ENCODE measurements at regions of chr1 and their contacts with region 1.

Region 1: GRCh38 chr1:206808615-206809014 is 36.3 kb upstream of the IL10 start:
- DNase-seq: no peak
- ATAC-seq: peak; percentile 99
- H3K4me3 ChIP-seq: no peak overlapping the region
- H3K27ac ChIP-seq: no peak overlapping the region
- H3K4me1 ChIP-seq: peaks cover 11% of the 10 kb centered on the region
- H3K27me3 ChIP-seq: no peaks in the 10 kb centered on the region
- CTCF ChIP-seq: peak; percentile 69 to 92 (median 70)
- EP300 ChIP-seq: no peak
- POLR2A ChIP-seq: no peak
- RAD21 ChIP-seq: peak; percentile 99

Region 2: GRCh38 chr1:206612129-206612876 is 196.3 kb before region 1 on chr1 and contains the start of gene EIF2D:
- CTCF ChIA-PET with region 1: interaction called, 5 read pairs
- POLR2A ChIA-PET with region 1: no interaction called
- RAD21 ChIA-PET with region 1: interaction called, 3 read pairs
- SMC1A ChIA-PET with region 1: interaction called, 5 read pairs
- in situ Hi-C with region 1: no loop called
- intact Hi-C with region 1: loop called (anchors 10 kb)
- DNase-seq: peak; percentile 58
- ATAC-seq: peak; percentile 82
- H3K4me3 ChIP-seq: peak within 1 kb of the TSS; percentile 83
- H3K27ac ChIP-seq: peak within 1 kb of the TSS; percentile 80
- H3K4me1 ChIP-seq: peaks cover 23% of the 10 kb centered on the region
- H3K27me3 ChIP-seq: no peaks in the 10 kb centered on the region
- CTCF ChIP-seq: peak; percentile 96 to 99 (median 98); a peak in 5 of 6 replicates
- EP300 ChIP-seq: peak in 1 of 2 experiments; percentile 37; a peak in 1 of 4 replicates
- POLR2A ChIP-seq: peak; percentile 100
- RAD21 ChIP-seq: peak; percentile 59
- polyA plus RNA-seq, gene EIF2D: 65.4 to 77.5 TPM

Region 3: GRCh38 chr1:206716870-206717673 is 91.5 kb before region 1 on chr1:
- CTCF ChIA-PET with region 1: interaction called, 805 read pairs
- POLR2A ChIA-PET with region 1: interaction called, 4 read pairs
- RAD21 ChIA-PET with region 1: interaction called, 15 read pairs
- SMC1A ChIA-PET with region 1: interaction called, 7 read pairs
- in situ Hi-C with region 1: no loop called
- intact Hi-C with region 1: no loop called
- DNase-seq: peak; percentile 88
- ATAC-seq: peak; percentile 78
- H3K4me3 ChIP-seq: 0 out of 2 replicates have a peak overlapping the region, but pooled peaks have one; percentile 19
- H3K27ac ChIP-seq: peak overlapping the region; percentile 73
- H3K4me1 ChIP-seq: peaks cover 74% of the 10 kb centered on the region
- H3K27me3 ChIP-seq: no peaks in the 10 kb centered on the region
- CTCF ChIP-seq: no peak
- EP300 ChIP-seq: peak in 1 of 2 experiments; percentile 34; a peak in 1 of 4 replicates
- POLR2A ChIP-seq: no peak
- RAD21 ChIP-seq: no peak

Region 4: GRCh38 chr1:206766251-206766856 is 42.3 kb before region 1 on chr1:
- CTCF ChIA-PET with region 1: interaction called, 299 read pairs
- POLR2A ChIA-PET with region 1: interaction called, 41 read pairs
- RAD21 ChIA-PET with region 1: interaction called, 225 read pairs
- SMC1A ChIA-PET with region 1: interaction called, 319 read pairs
- in situ Hi-C with region 1: no loop called
- intact Hi-C with region 1: loop called (anchors 1 kb)
- DNase-seq: peak; percentile 82
- ATAC-seq: peak; percentile 72
- H3K4me3 ChIP-seq: no peak overlapping the region
- H3K27ac ChIP-seq: peak overlapping the region; percentile 28
- H3K4me1 ChIP-seq: peaks cover 48% of the 10 kb centered on the region
- H3K27me3 ChIP-seq: no peaks in the 10 kb centered on the region
- CTCF ChIP-seq: no peak
- EP300 ChIP-seq: peak; percentile 45 to 55; a peak in 2 of 4 replicates
- POLR2A ChIP-seq: no peak
- RAD21 ChIP-seq: no peak

Region 5: DNA sequence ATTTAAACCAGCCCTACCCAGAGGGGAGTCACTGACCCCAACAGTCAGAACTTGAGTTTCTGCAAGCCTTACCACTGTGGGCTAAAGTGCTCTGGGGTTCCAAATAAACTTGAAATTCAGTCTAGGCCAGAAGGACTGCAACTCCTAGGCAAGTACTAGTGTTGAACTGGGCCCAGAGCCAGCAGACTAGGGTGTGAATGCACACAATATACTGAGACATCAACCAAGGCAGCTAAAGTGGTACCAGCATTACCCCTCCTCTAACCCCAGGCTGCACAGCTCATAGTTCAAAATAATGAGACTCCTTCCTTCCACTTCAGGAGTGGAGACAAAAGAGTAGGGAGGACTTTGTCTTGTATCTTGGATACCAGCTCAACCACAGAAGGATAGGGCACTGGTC is 37.9 kb after region 1 on chr1:
- CTCF ChIA-PET with region 1: interaction called, 13 read pairs
- POLR2A ChIA-PET with region 1: no interaction called
- RAD21 ChIA-PET with region 1: interaction called, 3 read pairs
- SMC1A ChIA-PET with region 1: interaction called, 4 read pairs
- in situ Hi-C with region 1: no loop called
- intact Hi-C with region 1: no loop called
- DNase-seq: no peak
- ATAC-seq: no peak
- H3K4me3 ChIP-seq: no peak overlapping the region
- H3K27ac ChIP-seq: no peak overlapping the region
- H3K4me1 ChIP-seq: no peaks in the 10 kb centered on the region
- H3K27me3 ChIP-seq: no peaks in the 10 kb centered on the region
- CTCF ChIP-seq: no peak
- EP300 ChIP-seq: no peak
- POLR2A ChIP-seq: no peak
- RAD21 ChIP-seq: no peak

Region 6: DNA sequence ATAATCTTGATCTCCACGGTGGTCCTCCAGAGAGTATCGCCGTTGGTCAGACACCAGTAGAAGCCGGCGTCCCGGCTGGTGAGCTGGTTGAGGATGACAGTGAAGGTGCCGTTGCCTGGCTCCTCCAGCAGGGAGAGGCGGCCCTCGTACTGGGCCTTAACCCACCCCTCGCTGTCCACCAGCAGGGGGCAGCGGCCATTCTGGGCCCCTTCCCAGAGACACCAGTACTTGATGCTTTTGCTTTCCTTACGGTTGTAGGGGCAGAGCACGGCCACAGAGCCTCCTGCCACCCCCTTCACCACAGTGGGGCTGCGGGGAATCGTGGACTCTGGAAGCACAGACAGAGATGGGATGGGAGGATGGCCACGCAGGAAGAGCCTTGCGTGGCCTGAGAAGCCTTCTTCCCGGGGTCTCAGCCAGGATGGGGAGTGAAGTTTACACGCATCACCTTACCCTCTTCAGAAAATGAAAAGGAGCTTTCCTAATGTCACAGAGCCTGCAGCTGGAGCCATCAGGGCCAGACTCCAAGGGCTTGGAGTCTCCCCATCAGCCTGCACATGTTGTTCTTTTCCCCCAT is 127.0 kb after region 1 on chr1:
- CTCF ChIA-PET with region 1: interaction called, 131 read pairs
- POLR2A ChIA-PET with region 1: interaction called, 3 read pairs
- RAD21 ChIA-PET with region 1: interaction called, 22 read pairs
- SMC1A ChIA-PET with region 1: interaction called, 85 read pairs
- in situ Hi-C with region 1: no loop called
- intact Hi-C with region 1: no loop called
- DNase-seq: no peak
- ATAC-seq: peak; percentile 64
- H3K4me3 ChIP-seq: no peak overlapping the region
- H3K27ac ChIP-seq: no peak overlapping the region
- H3K4me1 ChIP-seq: peaks cover 27% of the 10 kb centered on the region
- H3K27me3 ChIP-seq: no peaks in the 10 kb centered on the region
- CTCF ChIP-seq: peak; percentile 44 to 71 (median 57)
- EP300 ChIP-seq: no peak
- POLR2A ChIP-seq: no peak
- RAD21 ChIP-seq: peak; percentile 36; the same call in 1 of the 2 replicates

Region 7: DNA sequence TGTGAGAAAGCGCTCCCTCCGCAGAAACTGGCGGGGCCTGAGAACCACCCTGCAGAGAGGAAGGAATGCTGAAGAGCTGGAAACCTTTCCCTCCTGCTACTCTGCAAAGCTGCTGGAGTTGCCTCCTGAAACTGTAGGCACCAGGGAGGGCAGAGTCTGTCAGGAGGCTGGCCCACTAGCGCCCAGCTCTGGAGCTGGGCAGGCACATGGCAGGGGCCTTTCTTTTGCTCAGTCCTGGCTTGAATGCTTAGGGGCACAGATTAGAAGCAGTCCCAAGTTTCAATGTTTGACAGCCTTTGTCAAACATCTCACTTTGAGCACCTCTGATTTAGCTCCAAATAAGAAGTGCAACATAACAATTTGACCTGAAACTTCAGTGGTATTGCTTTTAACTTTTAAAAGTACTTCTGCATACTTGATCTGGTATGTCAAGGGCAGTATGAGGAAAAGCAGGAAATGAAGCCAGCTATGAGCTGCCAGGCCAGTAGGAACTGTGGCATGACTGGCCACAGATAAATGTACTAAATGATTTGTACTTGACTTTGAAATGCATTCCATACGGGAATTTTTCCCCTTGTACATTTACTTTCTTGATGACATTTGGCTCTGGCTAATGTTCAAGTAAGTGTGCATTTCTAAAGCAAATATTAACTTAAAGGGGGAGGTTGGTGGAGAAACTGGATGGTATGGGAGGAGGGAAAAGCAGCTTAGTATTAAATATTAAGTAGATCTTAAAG is 216.7 kb after region 1 on chr1:
- CTCF ChIA-PET with region 1: no interaction called
- POLR2A ChIA-PET with region 1: no interaction called
- RAD21 ChIA-PET with region 1: no interaction called
- SMC1A ChIA-PET with region 1: no interaction called
- in situ Hi-C with region 1: no loop called
- intact Hi-C with region 1: no loop called
- DNase-seq: no peak
- ATAC-seq: no peak
- H3K4me3 ChIP-seq: no peak overlapping the region
- H3K27ac ChIP-seq: no peak overlapping the region
- H3K4me1 ChIP-seq: no peaks in the 10 kb centered on the region
- H3K27me3 ChIP-seq: peaks cover 0 to 10% of the 10 kb centered on the region in 2 experiments
- CTCF ChIP-seq: no peak
- EP300 ChIP-seq: no peak
- POLR2A ChIP-seq: no peak
- RAD21 ChIP-seq: no peak

Measured in GM12878 (cell line).